CD4-positive, alpha-beta T cell (primary cell): ENCODE measurements at regions of chr5 and their contacts with region 1.

Region 1: DNA sequence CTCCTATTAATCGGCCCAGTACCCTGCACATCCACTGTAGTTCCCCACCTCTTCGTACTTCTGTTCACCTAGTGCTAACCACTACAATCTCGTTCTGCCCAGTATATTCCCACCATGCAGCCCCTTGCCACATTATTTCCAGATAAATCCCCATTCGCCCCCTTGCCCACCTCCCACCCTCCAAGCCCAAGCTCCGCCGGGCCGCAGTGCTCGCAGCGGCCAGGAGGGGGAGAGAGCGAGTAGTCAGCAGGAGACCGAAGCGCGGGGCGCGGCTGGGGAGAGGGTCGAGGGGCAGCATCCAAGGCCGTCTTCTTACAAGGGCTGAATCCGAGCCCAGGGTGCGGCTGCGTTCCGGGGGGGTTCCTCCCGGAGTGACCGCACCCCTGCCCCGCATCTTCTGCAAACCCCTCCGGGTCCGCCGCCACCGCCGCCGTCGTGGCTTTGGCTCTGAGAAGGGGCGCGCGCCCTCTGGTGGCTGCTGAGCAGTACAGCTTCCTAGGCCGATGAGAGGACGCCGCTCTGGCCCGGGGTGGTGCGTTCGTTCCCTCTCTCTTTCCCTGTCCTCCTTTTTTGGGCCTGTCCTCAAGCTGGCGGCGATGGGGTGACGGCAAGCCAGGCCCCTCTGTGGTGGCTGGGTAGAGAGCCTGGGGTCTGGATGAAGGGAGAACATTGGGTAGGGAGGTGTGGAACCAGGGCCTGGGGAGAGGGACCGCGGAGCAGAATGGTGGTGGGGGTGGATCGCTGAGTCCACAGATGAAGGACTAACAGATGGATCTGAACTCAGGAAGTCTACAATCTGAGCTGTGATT is 30.0 kb upstream of the PSD2 start:
- DNase-seq: peak; percentile 71 to 92 (median 78)
- ATAC-seq: peak; percentile 92
- H3K4me3 ChIP-seq: peak overlapping the region; percentile 60
- H3K4me3 Mint-ChIP-seq: peak overlapping the region; percentile 48
- H3K27ac ChIP-seq: no peak overlapping the region
- H3K27ac Mint-ChIP-seq: no peak overlapping the region
- H3K4me1 ChIP-seq: peaks cover 19% of the 10 kb centered on the region
- H3K4me1 Mint-ChIP-seq: peaks cover 9% of the 10 kb centered on the region
- H3K27me3 ChIP-seq: peaks cover 29 to 30% of the 10 kb centered on the region in 2 experiments
- H3K27me3 Mint-ChIP-seq: peaks cover 50% of the 10 kb centered on the region
- CTCF ChIP-seq: peak; percentile 100

Region 2: GRCh38 chr5:139287890-139288635 is 477.6 kb before region 1 on chr5:
- CTCF ChIA-PET with region 1: no interaction called
- POLR2A ChIA-PET with region 1: interaction called, 3 read pairs
- intact Hi-C with region 1: loop called in 1 of 2 experiments (anchors 5 kb)
- DNase-seq: peak in 3 of 14 experiments; percentile 36 to 61 (median 49)
- ATAC-seq: peak; percentile 62
- H3K4me3 ChIP-seq: no peak overlapping the region
- H3K4me3 Mint-ChIP-seq: peak overlapping the region; percentile 12
- H3K27ac ChIP-seq: no peak overlapping the region
- H3K27ac Mint-ChIP-seq: peak overlapping the region; percentile 35
- H3K4me1 ChIP-seq: peaks cover 7% of the 10 kb centered on the region
- H3K4me1 Mint-ChIP-seq: peaks cover 4% of the 10 kb centered on the region
- H3K27me3 ChIP-seq: no peaks in the 10 kb centered on the region
- H3K27me3 Mint-ChIP-seq: no peaks in the 10 kb centered on the region
- CTCF ChIP-seq: peak; percentile 13

Region 3: DNA sequence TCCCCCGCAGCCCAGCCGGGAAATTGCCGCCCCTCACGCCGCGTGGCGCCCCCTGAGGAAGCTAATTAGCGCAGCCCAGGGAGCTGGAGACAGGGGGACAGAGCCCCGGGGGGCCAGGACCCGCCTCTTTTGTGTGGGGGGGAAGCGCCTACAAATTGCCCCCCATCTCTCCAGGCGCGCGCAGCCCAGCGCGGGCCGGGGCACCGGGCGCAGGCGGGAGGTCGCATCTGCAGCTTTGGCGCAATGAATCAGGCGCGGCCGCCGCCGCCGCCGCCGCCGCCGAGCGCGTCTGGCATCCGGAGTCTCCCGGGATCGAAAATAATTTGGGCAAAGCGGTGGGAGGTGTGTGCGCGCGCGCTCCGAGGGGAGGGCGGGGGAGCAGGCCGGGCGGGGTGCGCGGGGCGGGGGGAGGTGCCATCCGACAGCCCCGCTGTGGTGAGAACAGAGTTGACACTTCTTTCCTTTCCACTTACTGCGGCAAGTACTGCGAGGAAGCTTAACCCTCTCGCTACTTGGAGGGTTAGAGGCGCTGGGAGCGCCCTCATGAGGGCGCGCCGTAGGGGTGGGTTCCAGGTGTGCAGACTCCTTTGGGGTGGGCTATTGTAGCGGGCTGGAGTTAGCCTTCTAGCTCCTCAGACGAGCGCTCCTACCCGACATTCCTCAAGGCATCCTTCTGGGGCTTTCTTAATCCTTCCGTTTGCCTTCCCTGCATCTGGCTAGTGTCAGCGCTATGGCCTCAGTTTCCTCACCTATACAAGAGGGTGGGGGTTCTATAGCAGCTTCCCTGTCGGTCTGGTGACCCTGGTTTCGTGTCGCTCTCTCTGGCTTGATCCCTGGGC is 54.3 kb before region 1 on chr5:
- CTCF ChIA-PET with region 1: interaction called, 24 read pairs
- POLR2A ChIA-PET with region 1: interaction called, 5 read pairs
- intact Hi-C with region 1: no loop called
- DNase-seq: peak in 13 of 14 experiments; percentile 26 to 82 (median 52)
- ATAC-seq: peak; percentile 69
- H3K4me3 ChIP-seq: peak overlapping the region; percentile 60
- H3K4me3 Mint-ChIP-seq: peak overlapping the region; percentile 80
- H3K27ac ChIP-seq: no peak overlapping the region
- H3K27ac Mint-ChIP-seq: peak overlapping the region; percentile 36
- H3K4me1 ChIP-seq: peaks cover 34% of the 10 kb centered on the region
- H3K4me1 Mint-ChIP-seq: peaks cover 30% of the 10 kb centered on the region
- H3K27me3 ChIP-seq: peaks cover 5 to 7% of the 10 kb centered on the region in 2 experiments
- H3K27me3 Mint-ChIP-seq: peaks cover 16% of the 10 kb centered on the region
- CTCF ChIP-seq: no peak

Region 4: DNA sequence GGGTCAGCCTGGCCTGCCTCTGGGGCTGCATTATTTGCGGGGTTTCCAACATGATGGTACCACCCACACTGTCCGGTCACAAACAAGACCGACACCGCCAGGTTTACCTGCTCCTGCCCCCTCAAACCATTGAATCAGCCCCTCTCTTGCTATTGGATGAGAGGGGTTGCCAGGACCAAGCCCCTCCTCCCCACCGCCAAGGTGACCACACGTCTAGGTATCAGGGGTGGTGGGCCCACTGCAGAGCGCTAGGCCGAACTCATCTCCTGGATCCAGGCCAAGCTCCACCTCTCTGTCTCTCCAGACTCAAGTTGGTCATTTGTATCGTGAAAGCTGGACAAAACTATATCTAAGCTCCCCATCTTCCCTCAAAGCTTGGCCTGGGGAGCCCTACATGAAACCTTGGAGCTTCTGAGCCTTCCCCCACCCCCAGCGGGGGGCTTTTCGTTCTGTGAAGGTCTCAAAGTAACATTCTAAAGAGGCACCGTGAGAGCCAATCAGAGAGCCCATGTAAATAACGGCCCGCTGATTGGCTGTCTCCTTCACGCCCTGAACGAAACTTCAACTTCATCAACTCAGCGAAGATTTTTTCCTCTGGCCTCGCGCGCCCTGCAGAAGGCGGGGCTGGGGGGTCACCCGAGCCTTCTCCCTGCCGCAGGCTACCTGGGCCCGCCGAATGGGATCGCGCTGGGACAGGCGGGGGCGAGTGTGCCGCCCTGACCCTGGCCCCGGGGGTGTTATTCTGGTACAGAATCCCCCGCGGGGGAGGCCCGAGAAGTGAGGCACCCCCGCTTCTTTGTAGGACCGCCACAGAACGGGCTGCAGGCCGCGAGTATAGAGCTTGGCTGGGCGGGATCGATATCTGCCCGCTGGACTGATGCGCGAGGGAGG is 19.6 kb before region 1 on chr5:
- CTCF ChIA-PET with region 1: interaction called, 45 read pairs
- POLR2A ChIA-PET with region 1: interaction called, 6 read pairs
- intact Hi-C with region 1: no loop called
- DNase-seq: peak in 10 of 14 experiments; percentile 23 to 75 (median 44)
- ATAC-seq: peak; percentile 58
- H3K4me3 ChIP-seq: peak overlapping the region; percentile 67
- H3K4me3 Mint-ChIP-seq: peak overlapping the region; percentile 87
- H3K27ac ChIP-seq: no peak overlapping the region
- H3K27ac Mint-ChIP-seq: no peak overlapping the region
- H3K4me1 ChIP-seq: peaks cover 31% of the 10 kb centered on the region
- H3K4me1 Mint-ChIP-seq: peaks cover 22% of the 10 kb centered on the region
- H3K27me3 ChIP-seq: peaks cover 7 to 19% of the 10 kb centered on the region in 2 experiments
- H3K27me3 Mint-ChIP-seq: peaks cover 25% of the 10 kb centered on the region
- CTCF ChIP-seq: no peak